ENCODE measurements at regions of chr16 and their contacts with region 1.

Region 1: DNA sequence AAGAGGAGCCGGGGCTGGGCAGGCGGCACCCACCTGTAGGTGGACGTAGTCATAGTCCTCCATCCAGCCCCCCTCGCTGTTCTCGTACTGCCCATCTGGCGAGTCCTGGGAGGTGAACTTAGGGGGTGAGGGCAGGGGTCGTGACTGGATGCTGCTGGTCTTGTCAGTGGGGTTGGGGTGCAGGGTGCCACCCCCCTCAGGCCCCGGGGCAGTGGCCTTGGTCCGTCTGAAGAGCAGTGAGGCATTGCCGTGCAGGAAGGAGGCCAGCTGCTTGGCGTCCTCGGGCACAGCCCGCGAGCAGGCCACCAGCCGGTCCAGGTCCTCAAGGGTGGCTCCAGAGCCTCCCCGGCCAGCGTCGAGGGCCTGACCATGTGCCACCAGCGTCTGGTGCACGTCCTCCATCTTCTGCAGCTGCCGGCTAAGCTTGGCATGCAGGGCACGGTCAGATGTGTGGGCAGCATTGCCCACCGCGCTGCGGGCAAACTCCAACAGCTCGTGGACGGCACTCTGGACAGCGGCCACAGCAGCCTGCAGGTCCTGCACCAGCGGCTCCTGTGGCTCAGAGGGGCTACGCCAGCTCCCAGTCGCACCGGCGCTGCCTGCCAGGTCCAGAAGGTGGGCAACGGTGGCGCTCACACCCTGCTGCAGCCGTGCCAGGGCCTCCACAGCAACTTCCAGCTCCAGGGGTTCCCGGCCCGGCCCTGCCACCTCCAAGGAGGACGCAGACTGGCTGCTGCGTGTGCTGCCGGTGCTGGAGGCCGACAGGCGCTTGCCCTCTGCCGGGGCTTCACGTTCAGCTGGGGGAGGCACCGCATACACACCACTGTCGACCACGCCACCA is 16.3 kb downstream of the CTRB1 start:
- DNase-seq: no peak
- H3K4me3 Mint-ChIP-seq: no peak overlapping the region
- H3K27ac Mint-ChIP-seq: no peak overlapping the region
- H3K4me1 Mint-ChIP-seq: peaks cover 6% of the 10 kb centered on the region
- H3K27me3 Mint-ChIP-seq: no peaks in the 10 kb centered on the region

Region 2: DNA sequence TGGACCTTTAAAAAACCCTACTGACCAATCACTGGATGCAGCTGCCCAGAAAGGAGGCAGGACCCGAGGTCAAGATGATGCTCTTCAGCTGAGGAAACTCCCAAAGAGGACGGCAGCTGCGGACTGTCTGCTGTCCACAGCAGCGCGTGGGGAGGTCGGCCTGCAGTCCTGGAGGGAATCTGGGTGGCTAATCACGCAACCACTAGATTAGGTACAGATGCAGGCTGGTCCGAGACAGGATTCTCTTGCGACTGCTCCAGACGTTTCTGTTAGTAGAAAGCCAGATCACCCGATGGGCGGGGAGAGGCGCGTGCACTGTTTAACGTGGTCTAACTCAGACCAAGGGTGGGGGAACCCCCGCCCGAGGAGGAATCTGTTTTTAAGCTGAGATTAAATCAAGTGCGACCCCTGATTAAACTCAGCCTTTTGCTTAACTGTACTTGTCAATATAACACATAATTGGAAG is 36.9 kb before region 1 on chr16:
- CTCF ChIA-PET with region 1: interaction called, 45 read pairs
- intact Hi-C with region 1: loop called (anchors 1 kb)
- DNase-seq: no peak
- H3K4me3 Mint-ChIP-seq: no peak overlapping the region
- H3K27ac Mint-ChIP-seq: no peak overlapping the region
- H3K4me1 Mint-ChIP-seq: peaks cover 9% of the 10 kb centered on the region
- H3K27me3 Mint-ChIP-seq: peaks cover 13% of the 10 kb centered on the region

Region 3: GRCh38 chr16:75218256-75219070 is 16.6 kb before region 1 on chr16 and contains the start of gene CTRB1:
- CTCF ChIA-PET with region 1: interaction called, 13 read pairs
- intact Hi-C with region 1: no loop called
- DNase-seq: peak; percentile 30
- H3K4me3 Mint-ChIP-seq: peak within 1 kb of the TSS; percentile 19
- H3K27ac Mint-ChIP-seq: peak within 1 kb of the TSS; percentile 74
- H3K4me1 Mint-ChIP-seq: peaks cover 20% of the 10 kb centered on the region
- H3K27me3 Mint-ChIP-seq: no peaks in the 10 kb centered on the region
- total RNA-seq, gene CTRB1: not detected

Region 4: GRCh38 chr16:75361936-75362335 is 126.9 kb after region 1 on chr16:
- CTCF ChIA-PET with region 1: interaction called, 12 read pairs
- intact Hi-C with region 1: no loop called
- DNase-seq: no peak
- H3K4me3 Mint-ChIP-seq: no peak overlapping the region
- H3K27ac Mint-ChIP-seq: no peak overlapping the region
- H3K4me1 Mint-ChIP-seq: peaks cover 4% of the 10 kb centered on the region
- H3K27me3 Mint-ChIP-seq: no peaks in the 10 kb centered on the region

Region 5: GRCh38 chr16:75379911-75380847 is 145.1 kb after region 1 on chr16:
- CTCF ChIA-PET with region 1: interaction called, 58 read pairs
- intact Hi-C with region 1: loop called (anchors 1 kb)
- DNase-seq: peak; percentile 53
- H3K4me3 Mint-ChIP-seq: no peak overlapping the region
- H3K27ac Mint-ChIP-seq: no peak overlapping the region
- H3K4me1 Mint-ChIP-seq: peaks cover 51% of the 10 kb centered on the region
- H3K27me3 Mint-ChIP-seq: peaks cover 2% of the 10 kb centered on the region

Region 6: GRCh38 chr16:75392911-75393310 is 157.8 kb after region 1 on chr16:
- CTCF ChIA-PET with region 1: interaction called, 58 read pairs
- intact Hi-C with region 1: no loop called
- DNase-seq: no peak
- H3K4me3 Mint-ChIP-seq: no peak overlapping the region
- H3K27ac Mint-ChIP-seq: no peak overlapping the region
- H3K4me1 Mint-ChIP-seq: peaks cover 1% of the 10 kb centered on the region
- H3K27me3 Mint-ChIP-seq: no peaks in the 10 kb centered on the region

Measured in activated naive CD4-positive, alpha-beta T cell treated with anti-CD3 and anti-CD28 coated beads for 36 hours (primary cell).